ENCODE measurements at regions of chr3 and their contacts with region 1.

Region 1: GRCh38 chr3:193997228-193998122 is 138.5 kb upstream of the HES1 start:
- DNase-seq: peak; percentile 32 to 77
- ATAC-seq: peak; percentile 80 to 90 (median 87)
- H3K4me3 ChIP-seq: no peak overlapping the region
- H3K27ac ChIP-seq: peak overlapping the region; percentile 84
- H3K4me1 ChIP-seq: peaks cover 47% of the 10 kb centered on the region
- H3K27me3 ChIP-seq: no peaks in the 10 kb centered on the region
- CTCF ChIP-seq: no peak

Region 2: DNA sequence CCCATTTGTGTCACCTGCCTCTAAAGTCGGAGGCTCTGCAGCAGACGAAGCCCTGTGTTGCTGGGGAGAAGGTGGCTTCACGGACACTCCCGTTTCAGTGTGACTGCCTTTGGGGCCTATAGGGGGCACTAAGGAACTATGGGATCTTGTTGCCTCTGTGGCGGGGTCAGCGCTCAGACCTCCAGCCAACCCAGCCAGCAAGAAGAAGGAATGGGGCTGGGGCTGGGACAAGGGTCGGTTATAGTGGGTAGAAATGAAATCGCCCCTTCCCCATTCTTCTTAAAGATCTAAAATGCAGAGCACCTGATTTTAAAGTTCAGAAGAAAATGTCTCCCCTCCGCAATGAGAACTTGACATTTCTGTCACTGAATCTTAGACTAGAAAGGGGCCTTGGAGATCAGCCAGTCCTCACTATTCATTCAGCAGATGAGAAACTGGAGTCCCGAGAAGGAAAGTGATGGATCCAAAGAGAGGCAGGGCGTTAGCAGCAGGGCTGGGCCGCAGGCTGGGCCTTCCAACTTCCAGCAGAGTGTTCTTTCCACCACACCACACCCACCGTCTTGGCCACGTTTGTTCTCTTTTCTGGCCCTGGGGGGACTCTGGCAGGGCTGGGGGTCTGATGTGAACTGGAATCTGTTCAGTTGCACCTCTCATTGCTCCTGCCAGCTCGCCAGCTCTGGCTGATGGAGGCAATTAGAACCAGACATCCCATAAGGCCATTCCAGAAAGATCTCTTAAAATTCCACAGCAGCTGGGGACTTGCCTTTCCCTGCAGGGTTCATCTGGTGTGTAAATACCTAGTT is 209.1 kb before region 1 on chr3:
- intact Hi-C with region 1: loop called (anchors 5 to 10 kb)
- DNase-seq: peak; percentile 50 to 75
- ATAC-seq: peak; percentile 95 to 99 (median 96)
- H3K4me3 ChIP-seq: no peak overlapping the region
- H3K27ac ChIP-seq: no peak overlapping the region
- H3K4me1 ChIP-seq: no peaks in the 10 kb centered on the region
- H3K27me3 ChIP-seq: peaks cover 0 to 4% (median 0%) of the 10 kb centered on the region in 3 donors
- CTCF ChIP-seq: peak; percentile 81

Region 3: GRCh38 chr3:193872265-193872753 is 125.2 kb before region 1 on chr3:
- intact Hi-C with region 1: loop called in 1 of 2 experiments (anchors 5 kb)
- DNase-seq: peak in 1 of 2 donors; percentile 32
- ATAC-seq: peak; percentile 95 to 97 (median 96)
- H3K4me3 ChIP-seq: no peak overlapping the region
- H3K27ac ChIP-seq: peak overlapping the region; percentile 41
- H3K4me1 ChIP-seq: peaks cover 15% of the 10 kb centered on the region
- H3K27me3 ChIP-seq: no peaks in the 10 kb centered on the region
- CTCF ChIP-seq: no peak

Region 4: GRCh38 chr3:194030369-194030768 is 32.9 kb after region 1 on chr3:
- intact Hi-C with region 1: no loop called
- DNase-seq: no peak
- ATAC-seq: no peak
- H3K4me3 ChIP-seq: no peak overlapping the region
- H3K27ac ChIP-seq: no peak overlapping the region
- H3K4me1 ChIP-seq: peaks cover 3% of the 10 kb centered on the region
- H3K27me3 ChIP-seq: no peaks in the 10 kb centered on the region
- CTCF ChIP-seq: no peak

Region 5: DNA sequence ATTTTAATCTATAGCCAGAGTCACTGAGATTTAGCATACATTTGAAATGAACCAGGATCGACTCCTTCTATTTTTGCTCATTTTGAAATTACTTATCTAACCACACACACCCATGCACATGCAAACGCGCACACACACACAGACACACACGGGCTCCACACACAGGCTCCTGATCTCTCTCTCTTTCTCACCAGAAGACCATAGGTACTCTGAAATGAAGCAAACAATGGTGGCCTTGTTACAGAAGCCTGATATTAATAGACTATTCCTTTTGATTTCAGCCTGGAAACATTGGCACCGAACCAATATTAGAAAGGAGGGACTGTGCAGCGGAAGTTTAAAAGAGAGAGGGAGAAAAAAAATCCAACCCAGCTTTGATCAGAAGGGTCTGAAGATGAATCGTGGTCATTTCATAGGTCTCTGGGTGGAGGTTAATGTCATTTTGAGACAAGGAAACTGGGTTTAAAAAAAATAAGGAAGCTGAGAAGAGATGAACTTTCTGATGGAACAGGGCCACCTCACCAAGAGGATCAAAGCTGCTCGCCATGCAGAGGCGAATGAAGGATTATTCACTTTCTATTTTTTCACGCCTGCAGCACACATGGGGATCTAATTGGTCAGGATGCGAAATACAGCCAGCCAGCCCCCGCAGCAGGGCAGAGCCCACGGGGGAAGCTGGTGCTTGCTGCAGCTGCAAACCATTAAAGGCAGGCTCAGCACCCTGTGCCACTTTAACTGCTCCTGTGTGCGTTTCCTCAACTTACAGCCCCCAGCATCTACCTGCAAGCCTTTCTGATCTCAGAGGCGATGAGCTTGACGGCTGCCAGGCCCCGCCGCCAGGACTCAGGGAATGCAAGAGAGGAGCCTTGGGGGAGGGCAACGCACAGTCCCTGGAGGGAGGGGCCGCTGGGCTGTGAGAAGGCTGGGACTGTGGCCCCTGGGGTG is 227.3 kb after region 1 on chr3:
- intact Hi-C with region 1: no loop called
- DNase-seq: no peak
- ATAC-seq: peak in 2 of 4 donors; percentile 53 to 74
- H3K4me3 ChIP-seq: no peak overlapping the region
- H3K27ac ChIP-seq: no peak overlapping the region
- H3K4me1 ChIP-seq: peaks cover 6% of the 10 kb centered on the region
- H3K27me3 ChIP-seq: no peaks in the 10 kb centered on the region
- CTCF ChIP-seq: no peak

Region 6: DNA sequence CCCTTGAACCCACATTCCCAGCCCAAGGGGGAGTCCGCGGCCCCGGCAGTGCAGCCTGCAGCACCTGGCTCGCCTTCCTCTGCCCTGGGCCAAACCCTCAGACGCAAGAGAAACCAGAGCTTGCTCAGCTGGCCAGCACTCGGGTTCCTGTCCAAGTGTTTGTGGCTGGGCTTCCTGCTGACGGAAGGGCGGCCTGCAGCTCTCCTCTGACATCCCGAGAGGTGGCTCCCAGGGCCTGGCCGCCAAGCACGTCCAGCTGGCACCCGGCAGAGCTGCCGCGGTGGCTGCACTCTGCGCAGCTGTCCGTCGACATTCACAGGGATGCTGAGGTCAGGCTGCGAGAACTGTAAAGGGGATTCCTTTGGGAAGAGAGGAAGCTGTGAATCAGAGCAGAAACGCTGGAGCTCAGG is 268.0 kb after region 1 on chr3:
- intact Hi-C with region 1: loop called (anchors 5 to 10 kb)
- DNase-seq: peak; percentile 91 to 97
- ATAC-seq: peak; percentile 95 to 97 (median 97)
- H3K4me3 ChIP-seq: no peak overlapping the region
- H3K27ac ChIP-seq: peak overlapping the region; percentile 64
- H3K4me1 ChIP-seq: peaks cover 25% of the 10 kb centered on the region
- H3K27me3 ChIP-seq: no peaks in the 10 kb centered on the region
- CTCF ChIP-seq: no peak

Region 7: DNA sequence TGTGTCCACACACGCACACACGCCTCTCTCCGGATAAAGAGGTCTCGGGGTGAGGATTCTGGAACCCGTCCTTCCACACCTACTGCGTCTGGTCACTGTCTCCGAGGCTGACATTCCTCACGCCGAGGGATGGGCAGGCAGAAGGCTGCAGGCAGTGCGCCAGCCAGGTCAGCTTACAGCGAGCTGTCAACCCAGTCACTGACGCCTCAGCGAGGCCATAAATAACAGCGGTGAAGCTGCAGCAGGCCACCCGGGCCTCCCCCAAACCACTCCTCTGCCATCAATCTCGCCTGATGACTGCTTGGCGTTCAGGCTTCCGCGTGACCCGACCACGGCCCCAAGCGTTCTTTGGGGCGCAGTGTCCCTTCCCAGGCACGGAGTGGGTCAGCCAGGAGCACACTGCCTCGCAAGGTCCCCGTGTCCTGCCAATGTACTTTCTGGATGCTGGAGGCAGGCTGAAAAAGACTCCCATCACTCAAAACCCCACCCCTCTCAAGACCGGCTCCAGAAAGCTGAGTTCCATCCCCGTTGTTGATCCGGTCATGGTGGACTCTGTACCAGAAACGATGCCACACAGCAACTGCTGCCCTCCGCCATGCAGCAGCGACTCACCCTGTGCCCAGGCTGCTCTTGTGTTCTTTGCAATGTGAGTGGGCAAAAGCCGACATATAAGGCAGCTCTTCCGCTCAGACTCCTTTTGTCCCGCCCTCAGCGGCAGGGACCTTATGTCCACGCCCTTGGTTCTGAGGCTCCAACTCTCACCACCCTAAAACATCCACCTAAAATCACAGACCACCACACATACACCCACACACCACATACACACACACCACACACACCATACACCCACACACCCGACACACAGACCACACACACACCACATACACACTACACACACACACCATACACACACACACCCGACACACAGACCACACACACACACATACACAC is 326.6 kb after region 1 on chr3:
- intact Hi-C with region 1: loop called (anchors 5 to 10 kb)
- DNase-seq: peak; percentile 88 to 97
- ATAC-seq: peak; percentile 89 to 94 (median 90)
- H3K4me3 ChIP-seq: peak overlapping the region; percentile 63
- H3K27ac ChIP-seq: peak overlapping the region; percentile 89
- H3K4me1 ChIP-seq: peaks cover 23% of the 10 kb centered on the region
- H3K27me3 ChIP-seq: no peaks in the 10 kb centered on the region
- CTCF ChIP-seq: no peak